AG04449 (cell line): ENCODE measurements at regions of chr3 and their contacts with region 1.

Region 1: GRCh38 chr3:38521391-38521987 is 25.3 kb downstream of the EXOG start:
- DNase-seq: no peak
- H3K4me3 ChIP-seq: no peak overlapping the region
- CTCF ChIP-seq: peak; percentile 83

Region 2: DNA sequence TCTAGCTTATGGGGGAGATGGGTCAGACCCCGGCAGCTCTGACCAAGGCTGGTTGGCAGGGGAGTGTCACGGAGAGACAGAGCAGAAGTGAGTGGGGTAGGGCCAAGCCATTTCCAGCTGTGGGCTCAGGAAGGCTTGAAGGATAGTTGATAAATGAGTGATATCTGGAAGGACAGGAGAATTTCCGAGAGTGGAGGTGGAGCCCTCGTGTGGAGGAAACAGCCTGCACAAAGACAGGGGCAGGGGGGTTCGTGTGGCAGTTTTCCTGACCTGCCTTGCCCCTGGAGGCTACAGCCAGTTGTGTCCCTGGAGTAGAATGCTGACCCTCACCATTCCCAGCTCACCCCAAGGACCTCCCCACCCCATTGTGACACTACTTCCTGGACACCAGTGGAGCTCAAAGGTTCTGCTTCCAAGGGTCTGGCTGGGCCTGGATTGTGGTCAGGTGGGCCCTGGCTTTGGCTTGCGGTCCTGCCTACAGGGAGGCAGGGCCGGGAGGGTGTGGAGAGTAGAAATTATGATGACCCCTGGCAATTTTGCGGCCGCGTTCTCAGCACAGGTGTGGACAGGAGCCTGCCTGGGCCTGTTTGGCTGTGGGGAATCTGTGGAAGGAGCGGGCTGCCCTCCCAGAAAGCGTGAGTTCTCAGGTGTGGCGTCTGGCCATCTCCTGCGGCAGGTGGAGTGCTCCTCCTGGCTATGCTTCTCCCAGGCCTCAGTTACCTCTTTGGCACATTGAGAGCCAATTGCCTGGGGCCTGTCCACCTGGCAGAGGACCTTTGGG is 239.4 kb before region 1 on chr3 and contains the start of gene SLC22A14:
- CTCF ChIA-PET with region 1: no interaction called
- POLR2A ChIA-PET with region 1: no interaction called
- DNase-seq: no peak
- H3K4me3 ChIP-seq: no peak within 1 kb of the TSS
- CTCF ChIP-seq: no peak

Region 3: DNA sequence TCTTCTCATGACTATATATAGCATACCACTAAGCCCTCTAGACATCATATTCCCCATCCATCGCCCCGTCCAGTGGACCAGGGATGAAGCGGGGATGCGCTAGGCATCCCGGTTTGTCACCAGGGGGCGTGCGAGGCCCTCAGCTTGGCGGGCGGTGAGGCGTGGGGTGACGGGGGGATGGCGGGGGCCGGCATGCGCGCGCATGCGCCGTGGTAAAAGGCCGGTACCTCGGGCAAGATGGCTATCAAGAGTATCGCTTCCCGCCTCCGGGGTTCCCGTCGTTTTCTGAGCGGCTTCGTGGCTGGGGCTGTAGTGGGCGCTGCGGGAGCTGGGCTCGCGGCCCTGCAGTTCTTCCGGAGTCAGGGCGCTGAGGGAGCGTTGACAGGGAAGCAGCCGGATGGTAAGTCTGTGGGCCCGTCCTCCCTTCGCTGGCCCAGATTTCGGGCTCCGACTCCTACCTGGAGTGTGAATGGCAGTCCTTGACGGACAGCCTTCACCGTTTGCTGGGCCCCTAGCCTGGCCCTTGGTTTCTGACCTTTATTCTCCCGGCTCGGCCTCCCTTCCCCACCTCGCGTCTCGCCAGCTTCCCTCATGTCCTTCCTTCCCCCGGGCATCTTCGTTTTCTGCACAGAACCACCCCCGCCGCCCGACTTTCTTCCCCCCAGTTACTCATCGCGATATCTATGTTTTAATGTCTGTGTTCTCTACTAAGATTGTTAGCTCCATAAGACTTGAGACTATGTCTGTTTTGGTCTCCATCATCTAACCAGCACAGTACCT is 25.2 kb before region 1 on chr3 and contains the start of gene EXOG:
- CTCF ChIA-PET with region 1: interaction called, 37 read pairs
- POLR2A ChIA-PET with region 1: interaction called, 6 read pairs
- DNase-seq: peak; percentile 42
- H3K4me3 ChIP-seq: peak within 1 kb of the TSS; percentile 86
- CTCF ChIP-seq: peak; percentile 90

Region 4: DNA sequence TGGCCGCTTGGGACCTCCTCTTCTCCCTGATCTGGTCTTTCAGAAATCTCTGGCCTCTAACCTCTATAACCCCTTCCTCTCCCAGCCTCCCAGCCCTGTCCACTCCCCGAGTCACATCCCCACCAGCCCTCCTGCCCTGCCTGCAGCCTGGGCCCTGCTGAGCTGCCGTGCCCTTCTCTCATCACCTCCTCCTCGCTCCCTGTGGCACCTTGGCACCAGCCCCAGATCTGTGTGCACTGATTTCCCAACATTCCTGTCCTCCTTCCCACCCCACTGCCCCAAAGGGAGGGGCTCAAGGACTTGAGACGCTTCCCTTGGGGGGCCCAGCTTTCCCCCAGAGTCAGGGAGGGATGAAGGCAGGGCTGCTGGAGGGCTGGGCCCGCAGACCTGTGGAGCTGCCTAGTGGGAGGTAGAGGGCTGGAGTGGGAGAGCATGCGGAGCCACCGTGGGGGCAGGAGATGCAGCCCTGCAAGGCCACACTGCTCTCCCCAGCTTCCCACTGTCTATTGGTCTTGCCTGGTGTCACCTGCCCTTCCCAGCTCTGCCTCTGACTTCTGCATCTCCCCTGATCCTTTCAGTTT is 17.4 kb after region 1 on chr3:
- CTCF ChIA-PET with region 1: interaction called, 19 read pairs
- POLR2A ChIA-PET with region 1: no interaction called
- DNase-seq: no peak
- H3K4me3 ChIP-seq: no peak overlapping the region
- CTCF ChIP-seq: no peak

Region 5: GRCh38 chr3:38669668-38670067 is 148.2 kb after region 1 on chr3:
- CTCF ChIA-PET with region 1: interaction called, 10 read pairs
- POLR2A ChIA-PET with region 1: no interaction called
- DNase-seq: no peak
- H3K4me3 ChIP-seq: no peak overlapping the region
- CTCF ChIP-seq: no peak

Region 6: GRCh38 chr3:38843898-38844297 is 322.4 kb after region 1 on chr3:
- CTCF ChIA-PET with region 1: interaction called, 100 read pairs
- POLR2A ChIA-PET with region 1: no interaction called
- DNase-seq: no peak
- H3K4me3 ChIP-seq: no peak overlapping the region
- CTCF ChIP-seq: peak; percentile 61

Region 7: GRCh38 chr3:39028546-39028945 is 507.1 kb after region 1 on chr3:
- CTCF ChIA-PET with region 1: interaction called, 33 read pairs
- POLR2A ChIA-PET with region 1: no interaction called
- DNase-seq: no peak
- H3K4me3 ChIP-seq: no peak overlapping the region
- CTCF ChIP-seq: no peak